Activated CD4-positive, alpha-beta T cell treated with anti-CD3 and anti-CD28 coated beads for 36 hours (primary cell): ENCODE measurements at regions of chr2 and their contacts with region 1.

Region 1: GRCh38 chr2:180980106-180980942 is at the start of gene UBE2E3:
- DNase-seq: peak; percentile 88
- ATAC-seq: peak; percentile 86
- H3K4me3 Mint-ChIP-seq: peak within 1 kb of the TSS; percentile 94
- H3K27ac Mint-ChIP-seq: peak within 1 kb of the TSS; percentile 95
- H3K4me1 Mint-ChIP-seq: peaks cover 40% of the 10 kb centered on the region
- H3K27me3 Mint-ChIP-seq: no peaks in the 10 kb centered on the region
- total RNA-seq, gene UBE2E3: 37.0 to 69.6 TPM

Region 2: DNA sequence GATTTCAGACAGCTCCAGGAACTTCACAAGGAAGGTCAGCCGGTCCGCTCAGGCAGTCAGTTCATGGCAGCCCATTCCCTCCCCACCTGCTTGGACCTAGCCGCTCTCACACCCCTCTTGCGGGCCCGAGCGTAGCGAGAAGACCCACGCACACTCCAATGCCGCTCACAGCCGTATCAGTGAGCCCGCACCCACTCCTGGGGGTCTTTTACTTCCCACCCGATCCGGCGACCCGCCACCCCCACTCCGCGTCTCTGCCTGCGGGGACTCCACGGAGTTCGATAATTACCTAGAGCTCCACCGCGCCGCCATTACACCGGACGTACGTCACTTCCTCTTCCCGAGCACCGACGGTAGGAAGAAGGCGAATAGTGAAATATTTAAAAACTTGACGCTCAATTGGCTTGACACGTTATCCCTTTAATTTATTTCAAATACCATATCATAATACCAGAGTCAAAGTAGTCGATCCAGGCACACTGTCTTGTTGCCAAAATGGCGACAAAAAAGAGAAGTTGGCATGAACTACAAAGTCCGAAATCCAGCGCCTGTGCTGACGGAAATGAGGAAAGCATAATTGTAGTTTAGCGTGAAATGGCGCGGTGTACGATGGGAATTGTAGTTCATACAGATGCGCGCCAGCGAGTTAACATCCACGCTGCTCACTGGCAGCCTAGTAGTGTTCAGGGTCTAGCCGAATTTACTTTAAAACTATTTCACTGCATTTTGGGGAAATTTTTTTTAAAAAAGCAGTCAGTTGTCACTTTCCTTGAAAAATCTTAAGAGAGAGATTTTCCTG is 973.3 kb before region 1 on chr2 and contains the start of gene CWC22:
- CTCF ChIA-PET with region 1: no interaction called
- POLR2A ChIA-PET with region 1: no interaction called
- intact Hi-C with region 1: loop called (anchors 1 to 10 kb)
- DNase-seq: peak; percentile 91
- ATAC-seq: peak; percentile 98
- H3K4me3 Mint-ChIP-seq: peak within 1 kb of the TSS; percentile 92
- H3K27ac Mint-ChIP-seq: peak within 1 kb of the TSS; percentile 99
- H3K4me1 Mint-ChIP-seq: peaks cover 38% of the 10 kb centered on the region
- H3K27me3 Mint-ChIP-seq: no peaks in the 10 kb centered on the region
- total RNA-seq, gene CWC22: 25.3 to 31.0 TPM

Region 3: DNA sequence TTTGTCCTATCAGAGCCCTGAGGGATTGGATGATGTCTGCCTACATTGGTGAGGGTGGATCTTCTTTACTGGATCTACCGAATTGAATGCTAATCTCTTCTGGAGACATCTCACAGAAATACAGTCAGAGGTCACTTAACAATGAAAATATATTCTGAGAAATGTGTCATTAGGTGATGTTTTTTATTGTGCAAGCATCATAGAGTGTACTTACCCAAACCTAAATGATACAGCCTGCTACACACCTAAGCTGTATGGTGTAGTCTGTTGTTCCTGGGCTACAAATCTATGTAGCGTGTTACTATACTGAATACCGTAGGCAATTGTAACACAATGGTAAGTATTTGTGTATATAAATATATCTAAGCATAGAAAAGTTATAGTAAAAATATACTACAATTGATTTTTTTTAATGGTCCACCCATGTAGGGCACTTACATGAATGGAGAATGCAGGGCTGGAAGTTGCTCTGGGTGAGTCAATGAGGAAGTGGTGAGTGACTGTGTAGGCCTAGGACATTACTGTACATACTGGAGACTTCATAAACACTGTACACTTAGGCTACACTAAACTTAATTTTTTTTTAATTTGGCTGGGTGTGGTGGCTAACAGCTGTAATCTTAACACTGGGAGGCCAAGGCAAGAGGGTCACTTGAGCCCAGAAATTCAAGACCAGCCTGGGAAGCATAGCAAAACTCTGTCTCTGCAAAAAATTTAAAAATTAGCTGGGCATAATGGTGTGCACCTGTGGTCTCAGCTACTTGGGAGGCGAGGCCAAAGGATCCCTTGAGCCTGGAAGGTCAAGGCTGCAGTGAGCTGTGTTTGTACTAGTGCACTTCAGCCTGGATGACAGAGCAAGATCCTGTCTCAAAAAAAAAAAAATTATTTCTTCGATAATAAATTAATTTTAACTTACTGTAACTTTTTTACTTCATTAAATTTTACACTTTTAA is 226.2 kb before region 1 on chr2:
- CTCF ChIA-PET with region 1: no interaction called
- POLR2A ChIA-PET with region 1: no interaction called
- intact Hi-C with region 1: no loop called
- DNase-seq: no peak
- ATAC-seq: no peak
- H3K4me3 Mint-ChIP-seq: no peak overlapping the region
- H3K27ac Mint-ChIP-seq: no peak overlapping the region
- H3K4me1 Mint-ChIP-seq: no peaks in the 10 kb centered on the region
- H3K27me3 Mint-ChIP-seq: peaks cover 2% of the 10 kb centered on the region

Region 4: DNA sequence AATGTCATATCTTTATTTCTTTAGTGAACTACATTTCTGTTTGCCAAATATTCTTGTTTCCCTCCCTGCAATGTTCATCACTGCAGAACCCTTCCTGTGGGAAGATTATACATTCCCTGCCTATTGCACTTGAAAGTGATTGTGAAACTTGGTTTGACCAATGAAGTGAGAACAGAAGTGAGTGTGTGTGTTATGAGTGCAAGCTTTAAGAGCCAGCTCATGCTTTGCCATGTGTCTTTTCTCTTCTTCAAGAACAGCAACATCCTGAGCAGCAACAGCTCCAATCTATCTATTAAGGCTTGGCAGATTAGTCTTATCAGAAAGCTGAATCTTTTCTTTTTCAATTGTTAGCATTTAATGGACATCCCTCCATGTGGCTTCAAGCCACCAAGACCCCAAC is 41.9 kb before region 1 on chr2:
- CTCF ChIA-PET with region 1: interaction called, 11 read pairs
- POLR2A ChIA-PET with region 1: interaction called, 6 read pairs
- intact Hi-C with region 1: loop called (anchors 2 kb)
- DNase-seq: no peak
- ATAC-seq: peak; percentile 43
- H3K4me3 Mint-ChIP-seq: no peak overlapping the region
- H3K27ac Mint-ChIP-seq: no peak overlapping the region
- H3K4me1 Mint-ChIP-seq: peaks cover 17% of the 10 kb centered on the region
- H3K27me3 Mint-ChIP-seq: peaks cover 7% of the 10 kb centered on the region

Region 5: GRCh38 chr2:180970016-180970415 is 10.3 kb before region 1 on chr2:
- CTCF ChIA-PET with region 1: interaction called, 20 read pairs
- POLR2A ChIA-PET with region 1: no interaction called
- intact Hi-C with region 1: no loop called
- DNase-seq: no peak
- ATAC-seq: no peak
- H3K4me3 Mint-ChIP-seq: no peak overlapping the region
- H3K27ac Mint-ChIP-seq: no peak overlapping the region
- H3K4me1 Mint-ChIP-seq: no peaks in the 10 kb centered on the region
- H3K27me3 Mint-ChIP-seq: peaks cover 6% of the 10 kb centered on the region

Region 6: DNA sequence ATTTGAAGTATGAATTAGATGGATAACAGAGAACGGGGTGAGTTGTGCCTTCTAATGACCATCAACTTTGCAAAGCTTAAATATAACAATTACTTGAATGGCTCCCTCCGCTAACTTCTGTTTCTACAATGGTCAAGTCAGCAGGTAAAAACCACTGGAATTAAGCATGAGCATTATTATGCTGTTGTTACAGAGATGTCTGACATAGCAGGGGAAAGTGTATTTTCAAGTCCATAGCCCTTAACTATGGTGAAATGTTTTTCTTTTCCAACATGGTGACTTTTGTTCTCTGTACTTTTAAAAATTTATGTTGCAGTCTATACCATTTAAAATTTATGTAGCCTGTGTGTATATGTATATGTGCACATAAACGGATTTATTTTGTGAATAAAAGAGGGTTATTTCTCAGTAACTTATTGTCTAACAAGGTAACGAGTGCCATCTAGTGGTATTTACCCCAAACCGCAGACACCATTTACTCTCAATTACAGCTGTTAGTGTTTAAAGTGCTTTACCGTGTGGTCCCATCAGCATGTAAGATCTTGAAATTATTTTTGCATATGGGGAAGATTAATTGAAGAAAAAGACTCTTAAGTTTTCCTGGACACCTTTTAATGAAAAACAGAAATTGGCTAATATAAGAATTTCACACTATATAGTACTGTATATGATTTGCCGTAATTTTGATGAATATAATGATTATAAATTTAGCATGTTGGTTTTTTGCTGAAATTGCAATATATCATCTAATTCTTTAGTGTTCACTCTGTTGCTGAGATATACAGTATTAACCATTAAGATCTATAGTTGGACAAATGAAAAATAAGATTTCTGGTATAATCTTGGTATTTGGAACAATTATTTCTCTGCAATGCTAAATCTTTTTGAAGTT is 78.3 kb after region 1 on chr2:
- CTCF ChIA-PET with region 1: interaction called, 3 read pairs
- POLR2A ChIA-PET with region 1: no interaction called
- intact Hi-C with region 1: loop called in 1 of 2 experiments (anchors 5 kb)
- DNase-seq: peak; percentile 50
- ATAC-seq: peak; percentile 69
- H3K4me3 Mint-ChIP-seq: no peak overlapping the region
- H3K27ac Mint-ChIP-seq: no peak overlapping the region
- H3K4me1 Mint-ChIP-seq: peaks cover 6% of the 10 kb centered on the region
- H3K27me3 Mint-ChIP-seq: no peaks in the 10 kb centered on the region

Region 7: GRCh38 chr2:181891966-181892798 is 911.9 kb after region 1 on chr2:
- CTCF ChIA-PET with region 1: no interaction called
- POLR2A ChIA-PET with region 1: no interaction called
- intact Hi-C with region 1: loop called in 1 of 2 experiments (anchors 5 kb)
- DNase-seq: peak; percentile 78
- ATAC-seq: peak; percentile 70
- H3K4me3 Mint-ChIP-seq: peak overlapping the region; percentile 87
- H3K27ac Mint-ChIP-seq: peak overlapping the region; percentile 79
- H3K4me1 Mint-ChIP-seq: peaks cover 35% of the 10 kb centered on the region
- H3K27me3 Mint-ChIP-seq: peaks cover 6% of the 10 kb centered on the region